K562 (cell line): ENCODE measurements at regions of chr1 and their contacts with region 1.

Region 1: GRCh38 chr1:35192853-35193664 is at the start of gene SFPQ:
- DNase-seq: peak; percentile 98 to 100 (median 99)
- ATAC-seq: peak; percentile 94
- H3K4me3 ChIP-seq: peak within 1 kb of the TSS; percentile 99
- H3K27ac ChIP-seq: peak within 1 kb of the TSS; percentile 96
- H3K4me1 ChIP-seq: peaks cover 10 to 18% of the 10 kb centered on the region in 2 experiments; a peak in 4 of 5 replicates
- H3K27me3 ChIP-seq: no peaks in the 10 kb centered on the region
- CTCF ChIP-seq: 0 out of 6 replicates have a peak, but pooled peaks of 1 of the 3 experiments have one; percentile 1
- EP300 ChIP-seq: no peak
- POLR2A ChIP-seq: peak; percentile 100
- RAD21 ChIP-seq: no peak
- polyA plus RNA-seq, gene SFPQ: 69.7 to 73.4 TPM

Region 2: GRCh38 chr1:34852677-34853217 is 340.3 kb before region 1 on chr1:
- CTCF ChIA-PET with region 1: no interaction called
- POLR2A ChIA-PET with region 1: no interaction called
- in situ Hi-C with region 1: no loop called
- intact Hi-C with region 1: loop called (anchors 10 kb)
- DNase-seq: peak; percentile 92 to 96 (median 94)
- ATAC-seq: peak; percentile 100
- H3K4me3 ChIP-seq: no peak overlapping the region
- H3K27ac ChIP-seq: no peak overlapping the region
- H3K4me1 ChIP-seq: peaks cover 0 to 2% of the 10 kb centered on the region in 2 experiments; a peak in 2 of 5 replicates
- H3K27me3 ChIP-seq: no peaks in the 10 kb centered on the region
- CTCF ChIP-seq: peak; percentile 98 to 100 (median 99)
- EP300 ChIP-seq: peak; percentile 49; the same call in 1 of the 2 replicates
- POLR2A ChIP-seq: no peak; the same call in 1 of the 2 replicates
- RAD21 ChIP-seq: peak; percentile 97 to 98

Region 3: GRCh38 chr1:35180776-35181374 is 12.2 kb before region 1 on chr1:
- CTCF ChIA-PET with region 1: no interaction called
- POLR2A ChIA-PET with region 1: interaction called, 42 read pairs
- in situ Hi-C with region 1: no loop called
- intact Hi-C with region 1: no loop called
- DNase-seq: peak in 2 of 4 experiments; percentile 4 to 54
- ATAC-seq: peak; percentile 22
- H3K4me3 ChIP-seq: no peak overlapping the region
- H3K27ac ChIP-seq: no peak overlapping the region
- H3K4me1 ChIP-seq: peaks cover 4 to 11% of the 10 kb centered on the region in 2 experiments; a peak in 2 of 5 replicates
- H3K27me3 ChIP-seq: no peaks in the 10 kb centered on the region
- CTCF ChIP-seq: no peak
- EP300 ChIP-seq: no peak; the same call in 1 of the 2 replicates
- POLR2A ChIP-seq: peak; percentile 73
- RAD21 ChIP-seq: no peak

Region 4: DNA sequence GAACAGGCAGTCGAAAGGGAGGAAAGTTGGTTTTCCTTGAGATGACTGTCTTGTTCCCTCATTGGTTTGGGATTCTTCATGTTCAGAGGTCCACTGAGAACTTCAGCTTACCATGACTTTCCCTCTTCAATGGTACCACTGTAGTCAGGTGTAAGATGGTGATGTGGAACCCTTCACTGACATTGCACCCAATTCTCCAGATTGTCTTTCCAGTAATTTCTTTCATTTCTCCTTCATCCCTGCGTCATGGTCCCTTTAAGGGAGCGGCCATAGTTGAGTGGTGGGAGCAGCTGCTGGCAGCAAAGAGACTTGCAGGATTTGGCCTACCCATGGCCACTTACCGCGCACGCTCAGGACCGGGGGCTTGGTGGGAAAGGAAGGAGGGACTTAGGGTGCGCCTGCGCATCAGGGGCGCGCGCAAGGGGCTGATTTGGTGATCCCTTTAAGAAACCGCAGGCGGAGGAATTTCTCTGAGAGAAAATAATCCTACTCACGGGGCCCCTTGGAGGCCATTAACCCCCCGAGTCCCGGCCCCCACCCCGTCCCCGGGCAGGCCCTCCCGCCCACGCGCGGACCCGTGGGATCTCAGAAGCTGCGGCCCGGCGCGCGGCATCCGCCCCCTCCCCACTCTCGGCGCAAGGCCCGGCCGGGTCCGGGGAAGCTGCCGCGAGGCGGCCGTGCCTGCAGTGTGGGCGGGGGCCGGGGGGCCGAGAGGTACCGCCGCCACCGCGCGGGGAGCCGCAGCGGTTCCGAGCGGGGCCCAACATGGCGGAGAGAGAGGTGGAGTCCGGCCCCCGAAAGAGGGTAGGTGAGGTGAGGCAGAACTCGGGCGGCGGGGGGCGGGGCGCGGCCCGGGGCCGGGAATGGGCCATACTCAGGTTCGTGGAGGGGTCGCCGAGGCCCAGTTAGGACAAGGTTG is 75.5 kb after region 1 on chr1 and contains the start of gene ZMYM4:
- CTCF ChIA-PET with region 1: no interaction called
- POLR2A ChIA-PET with region 1: interaction called, 6 read pairs
- in situ Hi-C with region 1: no loop called
- intact Hi-C with region 1: loop called (anchors 2 kb)
- DNase-seq: peak; percentile 92 to 99 (median 96)
- ATAC-seq: peak; percentile 94
- H3K4me3 ChIP-seq: peak within 1 kb of the TSS; percentile 88
- H3K27ac ChIP-seq: peak within 1 kb of the TSS; percentile 90
- H3K4me1 ChIP-seq: peaks cover 6 to 31% of the 10 kb centered on the region in 2 experiments; a peak in 4 of 5 replicates
- H3K27me3 ChIP-seq: no peaks in the 10 kb centered on the region
- CTCF ChIP-seq: peak; percentile 22 to 36 (median 24); a peak in 3 of 6 replicates
- EP300 ChIP-seq: peak; percentile 17; the same call in 1 of the 2 replicates
- POLR2A ChIP-seq: peak; percentile 72
- RAD21 ChIP-seq: no peak
- polyA plus RNA-seq, gene ZMYM4: 15.2 to 19.1 TPM

Region 5: GRCh38 chr1:35557292-35558063 is 364.4 kb after region 1 on chr1 and contains the starts of genes KIAA0319L and NCDN:
- CTCF ChIA-PET with region 1: no interaction called
- POLR2A ChIA-PET with region 1: interaction called, 4 read pairs
- in situ Hi-C with region 1: no loop called
- intact Hi-C with region 1: loop called (anchors 5 kb)
- DNase-seq: peak; percentile 98 to 99 (median 98)
- ATAC-seq: peak; percentile 94
- H3K4me3 ChIP-seq: peak within 1 kb of the TSS; percentile 91
- H3K27ac ChIP-seq: peak within 1 kb of the TSS; percentile 98
- H3K4me1 ChIP-seq: peaks cover 19 to 39% of the 10 kb centered on the region in 2 experiments
- H3K27me3 ChIP-seq: no peaks in the 10 kb centered on the region
- CTCF ChIP-seq: no peak; a peak in 1 of 6 replicates
- EP300 ChIP-seq: no peak; the same call in 1 of the 2 replicates
- POLR2A ChIP-seq: peak; percentile 94
- RAD21 ChIP-seq: no peak
- polyA plus RNA-seq, gene KIAA0319L: 2.4 to 5.9 TPM
- polyA plus RNA-seq, gene NCDN: 1.9 to 2.6 TPM

Region 6: GRCh38 chr1:36062321-36062720 is 869.3 kb after region 1 on chr1:
- CTCF ChIA-PET with region 1: no interaction called
- POLR2A ChIA-PET with region 1: no interaction called
- in situ Hi-C with region 1: no loop called
- intact Hi-C with region 1: no loop called
- DNase-seq: no peak
- ATAC-seq: no peak
- H3K4me3 ChIP-seq: no peak overlapping the region
- H3K27ac ChIP-seq: no peak overlapping the region
- H3K4me1 ChIP-seq: no peaks in the 10 kb centered on the region
- H3K27me3 ChIP-seq: no peaks in the 10 kb centered on the region
- CTCF ChIP-seq: no peak
- EP300 ChIP-seq: no peak
- POLR2A ChIP-seq: no peak
- RAD21 ChIP-seq: no peak